ENCODE measurements at regions of chr16 and their contacts with region 1.

Region 1: GRCh38 chr16:86563489-86564345 is 2.9 kb upstream of the FOXC2 start:
- DNase-seq: peak; percentile 72 to 91 (median 86)
- ATAC-seq: peak; percentile 100
- H3K4me3 ChIP-seq: peak overlapping the region in 1 of 2 experiments; percentile 24
- H3K4me3 Mint-ChIP-seq: peak overlapping the region; percentile 62
- H3K27ac ChIP-seq: no peak overlapping the region
- H3K27ac Mint-ChIP-seq: no peak overlapping the region
- H3K4me1 ChIP-seq: peaks cover 22% of the 10 kb centered on the region
- H3K4me1 Mint-ChIP-seq: peaks cover 23% of the 10 kb centered on the region
- H3K27me3 ChIP-seq: peaks cover 18 to 25% of the 10 kb centered on the region in 2 experiments
- H3K27me3 Mint-ChIP-seq: peaks cover 52% of the 10 kb centered on the region
- CTCF ChIP-seq: peak; percentile 100

Region 2: DNA sequence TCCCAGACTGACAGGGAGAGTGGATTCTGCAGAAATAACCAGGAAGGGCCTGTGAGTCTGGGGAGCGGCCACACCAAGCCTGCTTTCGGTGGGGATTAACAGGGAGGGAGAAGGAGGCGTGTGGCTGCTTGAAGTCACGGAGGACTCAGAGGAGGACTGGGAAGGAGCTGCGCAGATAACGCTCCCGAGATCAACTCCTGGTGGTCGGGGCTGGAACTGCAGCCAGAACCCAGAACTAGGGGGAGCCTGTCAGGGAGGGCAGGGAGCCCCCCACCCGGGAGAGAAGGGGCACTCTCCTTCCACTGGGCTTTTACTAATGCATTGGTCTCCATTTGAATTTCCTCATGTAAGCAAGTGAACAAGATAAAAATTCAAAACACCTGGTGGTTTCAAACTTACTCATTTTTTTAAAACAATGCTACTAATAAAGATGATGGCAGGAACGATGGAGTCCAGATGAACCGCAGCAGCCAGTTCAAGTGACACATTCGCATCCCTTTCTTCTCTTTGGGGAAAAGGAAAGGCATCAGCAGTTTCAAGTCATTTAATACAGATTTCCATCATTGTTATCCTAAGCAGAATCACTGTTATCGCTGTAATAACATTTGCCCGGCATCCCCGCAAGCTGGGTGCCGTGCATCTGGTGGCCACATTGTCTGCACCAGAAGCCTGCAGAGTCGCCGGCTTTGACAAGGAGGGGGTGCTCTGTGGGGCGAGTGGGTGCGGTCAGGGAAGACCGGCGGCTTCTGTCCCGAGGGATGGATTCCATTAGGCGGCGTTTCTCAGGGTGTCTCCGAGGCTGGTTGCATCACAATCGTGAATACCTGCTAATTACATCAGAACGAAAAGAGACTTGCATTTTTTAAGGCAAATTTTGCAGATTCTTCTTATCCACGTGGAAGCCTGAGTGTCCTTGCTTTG is 197.7 kb after region 1 on chr16:
- CTCF ChIA-PET with region 1: no interaction called
- POLR2A ChIA-PET with region 1: no interaction called
- intact Hi-C with region 1: loop called in 1 of 2 experiments (anchors 10 kb)
- DNase-seq: peak in 8 of 9 experiments; percentile 25 to 55 (median 37)
- ATAC-seq: no peak
- H3K4me3 ChIP-seq: no peak overlapping the region
- H3K4me3 Mint-ChIP-seq: no peak overlapping the region
- H3K27ac ChIP-seq: no peak overlapping the region
- H3K27ac Mint-ChIP-seq: no peak overlapping the region
- H3K4me1 ChIP-seq: no peaks in the 10 kb centered on the region
- H3K4me1 Mint-ChIP-seq: no peaks in the 10 kb centered on the region
- H3K27me3 ChIP-seq: no peaks in the 10 kb centered on the region
- H3K27me3 Mint-ChIP-seq: peaks cover 23% of the 10 kb centered on the region
- CTCF ChIP-seq: peak; percentile 59

Region 3: GRCh38 chr16:86874141-86874540 is 310.4 kb after region 1 on chr16:
- CTCF ChIA-PET with region 1: interaction called, 4 read pairs
- POLR2A ChIA-PET with region 1: no interaction called
- intact Hi-C with region 1: loop called in 1 of 2 experiments (anchors 1 kb)
- DNase-seq: peak in 3 of 9 experiments; percentile 7 to 16 (median 15)
- ATAC-seq: no peak
- H3K4me3 ChIP-seq: no peak overlapping the region
- H3K4me3 Mint-ChIP-seq: no peak overlapping the region
- H3K27ac ChIP-seq: no peak overlapping the region
- H3K27ac Mint-ChIP-seq: no peak overlapping the region
- H3K4me1 ChIP-seq: no peaks in the 10 kb centered on the region
- H3K4me1 Mint-ChIP-seq: no peaks in the 10 kb centered on the region
- H3K27me3 ChIP-seq: peaks cover 2 to 4% of the 10 kb centered on the region in 2 experiments
- H3K27me3 Mint-ChIP-seq: peaks cover 30% of the 10 kb centered on the region
- CTCF ChIP-seq: no peak

Region 4: GRCh38 chr16:87062569-87063442 is 499.1 kb after region 1 on chr16:
- CTCF ChIA-PET with region 1: no interaction called
- POLR2A ChIA-PET with region 1: no interaction called
- intact Hi-C with region 1: loop called in 1 of 2 experiments (anchors 10 kb)
- DNase-seq: peak in 6 of 9 experiments; percentile 17 to 58 (median 38)
- ATAC-seq: no peak
- H3K4me3 ChIP-seq: no peak overlapping the region
- H3K4me3 Mint-ChIP-seq: no peak overlapping the region
- H3K27ac ChIP-seq: no peak overlapping the region
- H3K27ac Mint-ChIP-seq: no peak overlapping the region
- H3K4me1 ChIP-seq: no peaks in the 10 kb centered on the region
- H3K4me1 Mint-ChIP-seq: no peaks in the 10 kb centered on the region
- H3K27me3 ChIP-seq: peaks cover 3 to 4% of the 10 kb centered on the region in 2 experiments
- H3K27me3 Mint-ChIP-seq: peaks cover 27% of the 10 kb centered on the region
- CTCF ChIP-seq: peak; percentile 43

Region 5: GRCh38 chr16:87278191-87279095 is 714.7 kb after region 1 on chr16:
- CTCF ChIA-PET with region 1: interaction called, 7 read pairs
- POLR2A ChIA-PET with region 1: no interaction called
- intact Hi-C with region 1: loop called in 1 of 2 experiments (anchors 2 kb)
- DNase-seq: peak in 6 of 9 experiments; percentile 6 to 41 (median 21)
- ATAC-seq: no peak
- H3K4me3 ChIP-seq: no peak overlapping the region
- H3K4me3 Mint-ChIP-seq: no peak overlapping the region
- H3K27ac ChIP-seq: no peak overlapping the region
- H3K27ac Mint-ChIP-seq: no peak overlapping the region
- H3K4me1 ChIP-seq: no peaks in the 10 kb centered on the region
- H3K4me1 Mint-ChIP-seq: no peaks in the 10 kb centered on the region
- H3K27me3 ChIP-seq: no peaks in the 10 kb centered on the region
- H3K27me3 Mint-ChIP-seq: peaks cover 6% of the 10 kb centered on the region
- CTCF ChIP-seq: peak; percentile 43

Region 6: DNA sequence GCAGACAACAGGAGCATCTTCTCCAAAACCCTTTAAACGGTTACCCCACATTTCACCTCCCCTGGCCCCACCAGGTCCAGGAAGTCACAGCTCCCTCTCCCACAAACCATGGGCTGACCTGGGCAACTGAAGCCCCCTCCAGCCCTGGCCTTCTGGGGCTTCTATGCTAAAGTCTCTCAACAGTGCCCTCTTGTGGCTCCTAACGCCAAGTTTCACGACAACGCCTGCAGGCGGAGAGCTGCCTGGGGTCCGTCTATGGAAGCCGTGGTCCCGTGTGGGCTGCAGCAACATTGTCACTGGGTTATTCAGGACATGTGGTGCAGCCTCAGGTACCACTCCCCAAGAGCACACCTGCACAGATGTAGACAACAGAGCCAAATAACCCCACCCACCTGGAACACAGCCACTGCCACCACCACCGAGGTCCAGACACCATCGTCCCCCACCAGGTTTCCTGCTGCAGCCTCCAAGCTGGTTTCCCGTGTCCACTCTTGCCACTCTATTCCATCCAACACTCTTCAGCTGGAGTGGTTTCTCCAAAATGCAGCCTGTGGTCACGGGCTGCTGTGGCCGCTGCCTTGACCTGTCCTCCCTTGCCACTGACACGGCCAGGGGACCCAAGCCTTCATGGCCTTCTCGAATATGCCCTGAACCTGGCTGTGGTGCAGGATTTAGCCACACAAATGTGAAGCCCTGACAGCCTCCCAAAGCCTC is 734.4 kb after region 1 on chr16:
- CTCF ChIA-PET with region 1: interaction called, 3 read pairs
- POLR2A ChIA-PET with region 1: no interaction called
- intact Hi-C with region 1: loop called (anchors 1 to 2 kb)
- DNase-seq: peak in 7 of 9 experiments; percentile 11 to 55 (median 45)
- ATAC-seq: peak; percentile 46
- H3K4me3 ChIP-seq: no peak overlapping the region
- H3K4me3 Mint-ChIP-seq: no peak overlapping the region
- H3K27ac ChIP-seq: no peak overlapping the region
- H3K27ac Mint-ChIP-seq: no peak overlapping the region
- H3K4me1 ChIP-seq: no peaks in the 10 kb centered on the region
- H3K4me1 Mint-ChIP-seq: peaks cover 3% of the 10 kb centered on the region
- H3K27me3 ChIP-seq: no peaks in the 10 kb centered on the region
- H3K27me3 Mint-ChIP-seq: no peaks in the 10 kb centered on the region
- CTCF ChIP-seq: peak; percentile 38

Measured in CD8-positive, alpha-beta T cell (primary cell).